Activated naive CD4-positive, alpha-beta T cell treated with anti-CD3 and anti-CD28 coated beads, Interleukin-2, amount 10 ng/mL, durations not matched to agents 7 days and 5 days (primary cell): ENCODE measurements at regions of chrX and their contacts with region 1.

Region 1: GRCh38 chrX:12814420-12814819 is 23.2 kb downstream of the PRPS2 start:
- DNase-seq: peak; percentile 69
- H3K4me3 Mint-ChIP-seq: no peak overlapping the region
- H3K27ac Mint-ChIP-seq: no peak overlapping the region
- H3K4me1 Mint-ChIP-seq: peaks cover 20% of the 10 kb centered on the region
- H3K27me3 Mint-ChIP-seq: no peaks in the 10 kb centered on the region

Region 2: GRCh38 chrX:12901486-12901885 is 87.1 kb after region 1 on chrX:
- CTCF ChIA-PET with region 1: interaction called, 146 read pairs
- DNase-seq: peak; percentile 80
- H3K4me3 Mint-ChIP-seq: no peak overlapping the region
- H3K27ac Mint-ChIP-seq: no peak overlapping the region
- H3K4me1 Mint-ChIP-seq: peaks cover 3% of the 10 kb centered on the region
- H3K27me3 Mint-ChIP-seq: peaks cover 4% of the 10 kb centered on the region